Endothelial cell of umbilical vein (primary cell): ENCODE measurements at regions of chr12 and their contacts with region 1.

Region 1: DNA sequence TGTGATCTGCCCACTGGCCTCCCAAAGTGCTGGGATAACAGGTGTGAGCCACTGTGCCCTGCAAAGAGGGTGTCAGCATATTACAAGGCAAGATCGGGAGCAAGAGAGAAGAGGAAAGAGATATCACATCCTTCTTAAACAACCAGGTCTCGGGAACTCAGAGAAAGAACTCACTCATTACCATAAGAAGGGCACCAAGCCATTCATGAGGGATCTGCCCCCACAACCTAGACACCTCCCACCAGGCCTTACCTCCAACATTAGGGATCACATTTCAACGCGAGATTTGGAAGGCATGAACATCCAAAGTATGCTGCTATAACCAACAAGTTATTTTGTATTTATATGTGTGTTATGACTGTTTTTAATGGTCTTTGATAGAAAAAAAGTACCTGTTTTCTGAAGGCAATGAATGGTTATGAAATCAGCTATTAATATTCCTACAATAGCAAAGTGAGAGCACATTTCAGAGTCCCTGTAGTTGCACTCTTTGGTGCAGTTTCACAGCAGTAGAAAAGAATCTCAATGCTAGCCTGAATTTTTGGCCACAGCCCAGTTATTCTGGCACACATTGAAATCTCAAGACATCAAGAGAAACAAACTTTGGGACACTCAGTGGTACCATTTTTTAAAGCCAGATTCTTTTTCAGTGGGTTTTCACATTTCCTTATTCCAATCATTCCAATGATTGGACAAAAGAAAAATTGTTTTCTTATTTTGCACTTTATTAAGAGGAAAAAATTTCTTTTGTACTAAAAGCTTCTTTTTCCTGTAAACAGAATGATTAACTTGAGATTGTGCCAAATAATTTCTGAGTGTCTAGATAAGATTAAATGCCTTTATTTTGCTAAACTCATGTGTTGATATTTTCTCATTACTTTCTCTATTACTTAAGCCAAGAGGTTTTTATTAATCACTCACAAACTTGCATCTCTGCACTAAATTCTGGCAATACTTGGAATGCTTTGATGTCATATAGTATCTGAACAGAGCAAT is 582.6 kb upstream of the ATP2B1 start:
- DNase-seq: peak; percentile 83
- H3K4me3 ChIP-seq: peak overlapping the region in 1 of 3 experiments; percentile 3
- H3K27ac ChIP-seq: peak overlapping the region; percentile 58
- H3K4me1 ChIP-seq: peaks cover 26% of the 10 kb centered on the region
- H3K27me3 ChIP-seq: no peaks in the 10 kb centered on the region
- CTCF ChIP-seq: no peak
- POLR2A ChIP-seq: no peak

Region 2: DNA sequence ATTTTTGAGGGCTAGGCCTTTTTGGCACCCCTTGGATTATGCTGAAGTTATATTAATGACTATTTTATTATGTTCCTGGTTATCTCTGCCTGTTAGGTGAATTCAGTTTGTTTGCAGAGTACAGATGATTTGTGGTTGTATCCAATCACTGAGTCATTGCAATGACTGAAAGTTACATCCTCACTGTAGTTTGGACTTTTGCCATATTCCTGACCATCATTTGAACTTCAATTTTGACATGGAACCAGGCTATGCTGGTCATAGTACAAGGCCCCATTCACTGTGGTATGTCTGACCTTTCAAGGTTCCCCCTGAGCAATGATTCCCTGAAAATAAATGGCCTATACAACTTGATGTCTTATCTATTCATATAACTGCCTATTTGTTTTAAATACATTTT is 42.7 kb after region 1 on chr12:
- CTCF ChIA-PET with region 1: no interaction called
- POLR2A ChIA-PET with region 1: no interaction called
- dilution Hi-C with region 1: no loop called
- intact Hi-C with region 1: loop called (anchors 2 kb)
- DNase-seq: peak; percentile 53
- H3K4me3 ChIP-seq: no peak overlapping the region
- H3K27ac ChIP-seq: no peak overlapping the region
- H3K4me1 ChIP-seq: peaks cover 40% of the 10 kb centered on the region
- H3K27me3 ChIP-seq: no peaks in the 10 kb centered on the region
- CTCF ChIP-seq: no peak
- POLR2A ChIP-seq: no peak